CD8-positive, alpha-beta T cell (primary cell): ENCODE measurements at regions of chr2 and their contacts with region 1.

Region 1: GRCh38 chr2:37318401-37318800 is 6.2 kb downstream of the PRKD3 start:
- DNase-seq: no peak
- ATAC-seq: no peak
- H3K4me3 ChIP-seq: no peak overlapping the region
- H3K4me3 Mint-ChIP-seq: no peak overlapping the region
- H3K27ac ChIP-seq: no peak overlapping the region
- H3K27ac Mint-ChIP-seq: no peak overlapping the region
- H3K4me1 ChIP-seq: peaks cover 20% of the 10 kb centered on the region
- H3K4me1 Mint-ChIP-seq: peaks cover 77% of the 10 kb centered on the region
- H3K27me3 ChIP-seq: no peaks in the 10 kb centered on the region
- H3K27me3 Mint-ChIP-seq: no peaks in the 10 kb centered on the region
- CTCF ChIP-seq: no peak

Region 2: GRCh38 chr2:37287966-37288365 is 30.4 kb before region 1 on chr2:
- CTCF ChIA-PET with region 1: no interaction called
- POLR2A ChIA-PET with region 1: interaction called, 3 read pairs
- intact Hi-C with region 1: loop called (anchors 2 to 5 kb)
- DNase-seq: peak in 2 of 9 experiments; percentile 28 to 34
- ATAC-seq: no peak
- H3K4me3 ChIP-seq: no peak overlapping the region
- H3K4me3 Mint-ChIP-seq: no peak overlapping the region
- H3K27ac ChIP-seq: no peak overlapping the region
- H3K27ac Mint-ChIP-seq: no peak overlapping the region
- H3K4me1 ChIP-seq: no peaks in the 10 kb centered on the region
- H3K4me1 Mint-ChIP-seq: no peaks in the 10 kb centered on the region
- H3K27me3 ChIP-seq: no peaks in the 10 kb centered on the region
- H3K27me3 Mint-ChIP-seq: no peaks in the 10 kb centered on the region
- CTCF ChIP-seq: no peak

Region 3: DNA sequence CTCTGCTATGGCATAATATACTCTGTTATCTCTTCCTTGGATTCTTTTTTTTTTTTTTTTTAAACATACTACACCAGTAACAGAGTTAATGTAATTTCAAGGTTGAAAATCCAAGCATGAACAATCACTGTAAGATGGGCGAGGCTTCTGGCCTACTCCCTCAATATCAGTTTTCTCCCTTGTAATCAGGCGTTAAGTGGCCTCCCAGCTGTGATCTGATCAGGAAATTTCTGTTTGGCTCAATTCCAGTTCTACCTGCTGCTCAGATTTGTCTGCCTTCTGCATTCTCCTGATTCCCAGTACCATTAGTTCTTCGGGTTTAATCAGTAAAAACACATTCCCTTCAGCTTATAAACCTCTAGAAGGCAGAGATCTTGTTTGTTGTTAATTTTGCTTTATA is 12.4 kb before region 1 on chr2:
- CTCF ChIA-PET with region 1: no interaction called
- POLR2A ChIA-PET with region 1: interaction called, 3 read pairs
- intact Hi-C with region 1: loop called in 1 of 2 experiments (anchors 2 kb)
- DNase-seq: no peak
- ATAC-seq: no peak
- H3K4me3 ChIP-seq: no peak overlapping the region
- H3K4me3 Mint-ChIP-seq: no peak overlapping the region
- H3K27ac ChIP-seq: no peak overlapping the region
- H3K27ac Mint-ChIP-seq: no peak overlapping the region
- H3K4me1 ChIP-seq: peaks cover 10% of the 10 kb centered on the region
- H3K4me1 Mint-ChIP-seq: peaks cover 47% of the 10 kb centered on the region
- H3K27me3 ChIP-seq: no peaks in the 10 kb centered on the region
- H3K27me3 Mint-ChIP-seq: no peaks in the 10 kb centered on the region
- CTCF ChIP-seq: no peak

Region 4: DNA sequence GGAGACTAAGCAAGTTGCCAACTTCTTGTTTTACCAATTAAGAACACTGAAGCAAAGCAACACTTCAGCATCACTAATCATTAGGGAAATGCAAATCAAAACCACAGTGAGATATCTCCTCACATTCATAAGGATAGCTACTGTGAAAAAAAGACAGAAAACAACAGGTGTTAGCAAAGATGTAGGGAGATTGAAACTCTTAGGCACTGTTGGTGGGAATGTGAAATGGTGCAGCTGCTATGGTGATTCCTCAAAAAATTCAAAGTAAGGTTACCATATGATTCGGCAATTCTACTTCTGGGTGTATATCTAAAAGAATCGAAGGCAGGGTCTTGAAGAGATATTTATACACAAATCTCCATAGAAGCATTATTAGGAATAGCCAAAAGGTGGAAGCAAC is 14.9 kb after region 1 on chr2:
- CTCF ChIA-PET with region 1: no interaction called
- POLR2A ChIA-PET with region 1: no interaction called
- intact Hi-C with region 1: no loop called
- DNase-seq: no peak
- ATAC-seq: no peak
- H3K4me3 ChIP-seq: no peak overlapping the region
- H3K4me3 Mint-ChIP-seq: no peak overlapping the region
- H3K27ac ChIP-seq: no peak overlapping the region
- H3K27ac Mint-ChIP-seq: no peak overlapping the region
- H3K4me1 ChIP-seq: no peaks in the 10 kb centered on the region
- H3K4me1 Mint-ChIP-seq: no peaks in the 10 kb centered on the region
- H3K27me3 ChIP-seq: peaks cover 0 to 5% of the 10 kb centered on the region in 2 experiments
- H3K27me3 Mint-ChIP-seq: no peaks in the 10 kb centered on the region
- CTCF ChIP-seq: no peak

Region 5: GRCh38 chr2:37570773-37571586 is 252.6 kb after region 1 on chr2:
- CTCF ChIA-PET with region 1: no interaction called
- POLR2A ChIA-PET with region 1: no interaction called
- intact Hi-C with region 1: no loop called
- DNase-seq: no peak
- ATAC-seq: no peak
- H3K4me3 ChIP-seq: no peak overlapping the region
- H3K4me3 Mint-ChIP-seq: no peak overlapping the region
- H3K27ac ChIP-seq: no peak overlapping the region
- H3K27ac Mint-ChIP-seq: no peak overlapping the region
- H3K4me1 ChIP-seq: peaks cover 8% of the 10 kb centered on the region
- H3K4me1 Mint-ChIP-seq: peaks cover 17% of the 10 kb centered on the region
- H3K27me3 ChIP-seq: no peaks in the 10 kb centered on the region
- H3K27me3 Mint-ChIP-seq: no peaks in the 10 kb centered on the region
- CTCF ChIP-seq: no peak

Region 6: GRCh38 chr2:37786854-37787253 is 468.5 kb after region 1 on chr2:
- CTCF ChIA-PET with region 1: no interaction called
- POLR2A ChIA-PET with region 1: no interaction called
- intact Hi-C with region 1: no loop called
- DNase-seq: no peak
- ATAC-seq: no peak
- H3K4me3 ChIP-seq: no peak overlapping the region
- H3K4me3 Mint-ChIP-seq: no peak overlapping the region
- H3K27ac ChIP-seq: no peak overlapping the region
- H3K27ac Mint-ChIP-seq: no peak overlapping the region
- H3K4me1 ChIP-seq: no peaks in the 10 kb centered on the region
- H3K4me1 Mint-ChIP-seq: no peaks in the 10 kb centered on the region
- H3K27me3 ChIP-seq: no peaks in the 10 kb centered on the region
- H3K27me3 Mint-ChIP-seq: no peaks in the 10 kb centered on the region
- CTCF ChIP-seq: no peak